T-cell (primary cell): ENCODE measurements at regions of chr6 and their contacts with region 1.

Region 1: GRCh38 chr6:33248925-33249731 is 22.5 kb downstream of the VPS52 start:
- DNase-seq: peak; percentile 91 to 99 (median 94)
- ATAC-seq: peak; percentile 87 to 90 (median 90)
- H3K4me3 ChIP-seq: peak overlapping the region; percentile 58 to 83
- H3K4me3 Mint-ChIP-seq: peak overlapping the region; percentile 87 to 97 (median 87)
- H3K27ac ChIP-seq: peak overlapping the region; percentile 95
- H3K27ac Mint-ChIP-seq: peak overlapping the region; percentile 98
- H3K4me1 ChIP-seq: peaks cover 19 to 31% of the 10 kb centered on the region in 2 experiments
- H3K4me1 Mint-ChIP-seq: peaks cover 38 to 39% (median 39%) of the 10 kb centered on the region in 3 donors
- H3K27me3 ChIP-seq: peaks cover 0 to 2% of the 10 kb centered on the region in 2 experiments
- H3K27me3 Mint-ChIP-seq: no peaks in the 10 kb centered on the region

Region 2: DNA sequence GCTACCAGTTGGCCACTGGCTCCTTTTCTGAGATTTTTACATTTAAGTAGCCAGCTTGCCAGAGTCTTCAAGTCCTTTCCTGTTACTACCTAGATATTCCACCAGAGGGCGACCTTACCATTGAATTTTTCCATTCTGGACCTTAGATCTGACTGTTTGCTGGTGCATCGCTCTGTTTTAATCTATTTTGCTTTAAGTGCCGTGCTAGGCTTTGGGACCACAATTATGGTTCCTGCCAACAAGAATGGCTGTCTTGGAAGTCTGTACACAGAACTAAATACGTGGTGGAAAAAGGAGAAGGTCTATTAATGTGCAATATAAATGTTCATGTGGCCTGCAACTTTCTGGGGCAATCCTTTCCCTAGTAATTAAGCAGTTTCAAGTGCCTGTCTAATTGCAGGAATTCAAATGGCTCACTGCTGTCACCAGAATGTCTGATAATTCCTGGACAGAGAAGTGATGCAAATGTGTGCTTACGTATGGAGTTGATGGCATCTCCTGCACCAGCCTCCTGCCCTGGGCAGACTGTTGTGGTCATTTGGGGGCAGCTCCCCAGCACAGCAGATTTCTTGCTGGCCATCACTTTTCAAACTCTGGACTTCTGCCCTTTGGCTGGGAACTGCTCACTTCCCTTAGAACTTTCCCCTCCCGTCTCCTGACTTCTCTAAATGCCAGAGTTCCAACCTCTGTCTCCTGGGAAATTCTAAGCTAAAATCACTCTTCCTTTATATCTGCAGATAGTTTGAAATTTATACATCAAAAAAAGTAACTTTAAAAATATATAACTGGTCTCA is 234.1 kb before region 1 on chr6:
- CTCF ChIA-PET with region 1: interaction called in 1 of 2 experiments, 16 read pairs
- POLR2A ChIA-PET with region 1: no interaction called
- DNase-seq: peak in 23 of 35 experiments; percentile 12 to 89 (median 45)
- ATAC-seq: peak; percentile 63 to 80 (median 74)
- H3K4me3 ChIP-seq: no peak overlapping the region
- H3K4me3 Mint-ChIP-seq: no peak overlapping the region
- H3K27ac ChIP-seq: no peak overlapping the region
- H3K27ac Mint-ChIP-seq: no peak overlapping the region
- H3K4me1 ChIP-seq: peaks cover 0 to 16% of the 10 kb centered on the region in 2 experiments
- H3K4me1 Mint-ChIP-seq: peaks cover 10 to 38% (median 30%) of the 10 kb centered on the region in 3 donors
- H3K27me3 ChIP-seq: peaks cover 0 to 17% of the 10 kb centered on the region in 2 experiments
- H3K27me3 Mint-ChIP-seq: peaks cover 7 to 10% of the 10 kb centered on the region in 2 donors

Region 3: DNA sequence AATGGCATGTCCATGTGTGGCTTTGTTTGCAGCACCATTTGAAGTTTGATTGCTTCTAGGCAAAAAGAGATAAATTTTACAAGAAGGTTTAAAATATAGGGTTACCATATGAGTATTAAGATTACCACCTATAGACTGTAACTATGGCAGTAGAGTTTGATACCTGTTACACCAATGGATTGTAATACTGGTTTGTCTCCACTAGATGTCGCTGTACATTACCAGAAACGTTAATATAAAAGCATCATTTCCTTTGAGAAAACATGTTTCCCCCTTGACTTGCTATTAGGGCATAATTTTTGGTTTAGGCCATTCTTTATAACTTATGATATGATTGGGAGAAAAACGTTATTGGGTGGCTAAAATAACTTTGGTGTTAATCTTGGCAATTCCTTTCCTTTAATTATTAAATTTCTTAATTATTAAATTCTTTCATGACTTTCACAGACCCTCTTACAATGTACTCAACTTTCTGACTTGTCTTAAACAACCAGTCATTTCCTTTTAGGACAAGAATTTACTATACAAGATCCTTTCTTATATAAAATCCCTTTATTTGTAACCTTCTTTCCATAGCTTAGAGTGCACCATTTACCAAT is 130.5 kb before region 1 on chr6:
- CTCF ChIA-PET with region 1: interaction called in 1 of 2 experiments, 10 read pairs
- POLR2A ChIA-PET with region 1: no interaction called
- DNase-seq: peak in 3 of 35 experiments; percentile 6 to 82 (median 41)
- ATAC-seq: peak; percentile 63 to 70 (median 68)
- H3K4me3 ChIP-seq: no peak overlapping the region
- H3K4me3 Mint-ChIP-seq: no peak overlapping the region
- H3K27ac ChIP-seq: no peak overlapping the region
- H3K27ac Mint-ChIP-seq: no peak overlapping the region
- H3K4me1 ChIP-seq: peaks cover 4 to 13% of the 10 kb centered on the region in 2 experiments
- H3K4me1 Mint-ChIP-seq: peaks cover 15 to 22% (median 20%) of the 10 kb centered on the region in 3 donors
- H3K27me3 ChIP-seq: peaks cover 10 to 41% of the 10 kb centered on the region in 2 experiments
- H3K27me3 Mint-ChIP-seq: peaks cover 47 to 50% of the 10 kb centered on the region in 2 donors

Region 4: GRCh38 chr6:33161354-33162331 is 87.5 kb before region 1 on chr6:
- CTCF ChIA-PET with region 1: interaction called in 1 of 2 experiments, 11 read pairs
- POLR2A ChIA-PET with region 1: no interaction called
- DNase-seq: peak; percentile 49 to 87 (median 74)
- ATAC-seq: peak; percentile 94 to 97 (median 96)
- H3K4me3 ChIP-seq: peak overlapping the region; percentile 40 to 51
- H3K4me3 Mint-ChIP-seq: peak overlapping the region; percentile 78 to 83 (median 83)
- H3K27ac ChIP-seq: no peak overlapping the region
- H3K27ac Mint-ChIP-seq: peak overlapping the region in 1 of 2 donors; percentile 66
- H3K4me1 ChIP-seq: peaks cover 0 to 16% of the 10 kb centered on the region in 2 experiments
- H3K4me1 Mint-ChIP-seq: peaks cover 12 to 15% (median 13%) of the 10 kb centered on the region in 3 donors
- H3K27me3 ChIP-seq: peaks cover 0 to 55% of the 10 kb centered on the region in 2 experiments
- H3K27me3 Mint-ChIP-seq: peaks cover 6 to 17% of the 10 kb centered on the region in 2 donors

Region 5: DNA sequence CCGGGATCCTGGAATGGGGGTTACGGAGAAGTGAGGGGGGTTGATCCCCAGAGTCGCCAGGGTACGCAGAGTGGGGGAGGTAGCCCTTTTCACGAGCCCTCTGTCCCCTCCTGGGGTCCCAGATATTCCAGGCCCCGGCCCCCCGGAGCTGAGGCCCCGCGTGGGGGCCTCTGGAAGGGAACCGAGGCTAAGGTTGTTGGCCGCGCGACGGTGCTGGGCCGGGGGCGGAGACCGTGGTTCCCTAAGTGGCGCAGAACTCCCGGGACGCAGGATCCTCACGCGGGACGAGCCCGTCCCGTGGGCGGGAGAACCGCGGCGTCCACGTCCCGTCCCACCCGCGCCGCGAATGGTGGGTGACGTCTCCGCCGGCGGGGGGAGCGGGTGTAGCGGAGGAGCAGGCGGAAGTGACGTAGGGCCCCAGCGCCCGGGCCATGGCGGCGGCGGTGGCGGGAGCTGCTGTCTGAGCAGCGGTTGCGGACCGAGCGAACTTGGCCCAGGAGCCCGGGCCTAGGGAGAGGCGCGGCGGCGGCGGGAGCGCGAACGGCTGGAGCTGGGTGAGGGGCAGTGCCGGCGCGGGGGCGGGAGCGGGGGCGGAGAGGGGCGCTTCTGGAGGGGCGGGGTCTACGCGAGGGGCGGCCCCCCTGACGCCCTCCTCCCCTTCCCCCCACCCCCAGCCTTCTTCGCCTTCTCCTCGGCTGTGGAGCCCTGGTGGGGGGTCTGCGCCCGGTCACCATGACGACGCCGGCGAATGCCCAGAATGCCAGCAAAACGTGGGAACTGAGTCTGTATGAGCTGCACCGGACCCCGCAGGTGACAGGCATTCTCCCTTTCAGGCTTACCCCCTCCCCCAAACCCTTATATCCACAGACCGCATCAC is 40.8 kb before region 1 on chr6 and contains the start of gene RING1:
- CTCF ChIA-PET with region 1: interaction called in 1 of 2 experiments, 15 read pairs
- POLR2A ChIA-PET with region 1: interaction called in 1 of 2 experiments, 4 read pairs
- DNase-seq: peak; percentile 74 to 94 (median 85)
- ATAC-seq: peak; percentile 64 to 75 (median 68)
- H3K4me3 ChIP-seq: peak within 1 kb of the TSS; percentile 84 to 98
- H3K4me3 Mint-ChIP-seq: peak within 1 kb of the TSS; percentile 81 to 89 (median 87)
- H3K27ac ChIP-seq: peak within 1 kb of the TSS; percentile 93
- H3K27ac Mint-ChIP-seq: peak within 1 kb of the TSS; percentile 83 to 84
- H3K4me1 ChIP-seq: peaks cover 13 to 53% of the 10 kb centered on the region in 2 experiments
- H3K4me1 Mint-ChIP-seq: peaks cover 51 to 57% (median 53%) of the 10 kb centered on the region in 3 donors
- H3K27me3 ChIP-seq: peaks cover 0 to 18% of the 10 kb centered on the region in 2 experiments
- H3K27me3 Mint-ChIP-seq: peaks cover 0 to 18% of the 10 kb centered on the region in 2 donors
- total RNA-seq, gene RING1: 37.7 to 43.8 (median 42.6) TPM

Region 6: DNA sequence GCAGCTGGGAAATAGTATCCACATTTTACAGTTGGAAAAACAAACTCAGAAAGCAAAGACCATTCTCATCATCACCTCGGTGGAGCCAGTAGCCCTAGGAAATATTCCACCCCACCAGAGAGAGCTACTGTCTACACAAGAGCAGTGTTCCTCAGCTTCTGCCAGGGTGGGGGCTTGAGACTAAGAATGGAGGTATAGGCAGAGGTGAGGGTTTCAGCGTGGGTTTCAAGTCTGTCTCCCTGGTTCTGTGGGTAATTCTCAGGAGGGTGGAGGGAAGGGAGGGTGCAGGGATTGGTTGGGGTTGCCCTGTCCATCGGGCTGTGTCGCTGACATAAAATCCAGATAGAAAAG is 62.9 kb after region 1 on chr6:
- CTCF ChIA-PET with region 1: no interaction called
- POLR2A ChIA-PET with region 1: no interaction called
- DNase-seq: no peak
- ATAC-seq: no peak
- H3K4me3 ChIP-seq: peak overlapping the region; percentile 93 to 99
- H3K4me3 Mint-ChIP-seq: peak overlapping the region; percentile 98 to 100 (median 99)
- H3K27ac ChIP-seq: peak overlapping the region; percentile 99
- H3K27ac Mint-ChIP-seq: peak overlapping the region; percentile 97 to 98
- H3K4me1 ChIP-seq: peaks cover 20 to 69% of the 10 kb centered on the region in 2 experiments
- H3K4me1 Mint-ChIP-seq: peaks cover 58 to 65% (median 63%) of the 10 kb centered on the region in 3 donors
- H3K27me3 ChIP-seq: no peaks in the 10 kb centered on the region
- H3K27me3 Mint-ChIP-seq: no peaks in the 10 kb centered on the region

Region 7: GRCh38 chr6:33439956-33440648 is 191.0 kb after region 1 on chr6:
- CTCF ChIA-PET with region 1: no interaction called
- POLR2A ChIA-PET with region 1: no interaction called
- DNase-seq: no peak
- ATAC-seq: no peak
- H3K4me3 ChIP-seq: no peak overlapping the region
- H3K4me3 Mint-ChIP-seq: no peak overlapping the region
- H3K27ac ChIP-seq: no peak overlapping the region
- H3K27ac Mint-ChIP-seq: peak overlapping the region; percentile 32 to 64
- H3K4me1 ChIP-seq: peaks cover 0 to 2% of the 10 kb centered on the region in 2 experiments
- H3K4me1 Mint-ChIP-seq: peaks cover 0 to 2% (median 0%) of the 10 kb centered on the region in 3 donors
- H3K27me3 ChIP-seq: no peaks in the 10 kb centered on the region
- H3K27me3 Mint-ChIP-seq: no peaks in the 10 kb centered on the region